PC-9 (cell line): ENCODE measurements at regions of chr11 and their contacts with region 1.

Region 1: DNA sequence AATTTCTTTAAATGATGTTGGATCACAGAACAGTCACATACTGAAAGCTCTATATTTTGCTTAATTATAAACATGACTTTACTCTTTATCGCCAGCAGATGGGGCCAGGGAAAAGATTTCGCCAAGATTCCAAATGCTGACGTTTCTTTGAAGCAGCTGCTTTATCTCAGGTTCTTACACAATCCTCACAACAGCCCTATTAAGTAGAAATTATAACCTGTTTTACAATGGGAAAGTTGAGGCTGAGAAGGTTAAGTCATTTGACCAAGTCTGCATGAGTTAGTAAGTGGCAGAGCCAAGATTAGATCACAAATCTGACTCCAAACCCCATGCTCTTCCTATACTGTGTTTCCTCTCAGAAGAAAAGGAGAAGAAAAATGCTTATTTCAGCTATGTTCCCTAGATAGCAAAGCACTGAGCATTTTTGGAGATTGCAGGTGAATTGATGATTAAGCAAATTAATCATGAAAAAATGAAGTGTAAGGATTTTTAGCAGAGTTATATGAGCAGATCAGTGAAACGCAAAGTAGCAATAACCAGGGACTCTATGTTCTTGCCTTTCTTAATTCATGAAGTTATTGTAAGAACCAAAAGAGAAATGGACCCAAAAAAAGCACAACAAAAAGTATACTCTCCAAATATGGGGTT is 79.0 kb downstream of the AASDHPPT start:
- DNase-seq: peak in 1 of 2 experiments; percentile 3
- H3K4me3 ChIP-seq: no peak overlapping the region
- H3K27ac ChIP-seq: no peak overlapping the region
- H3K4me1 ChIP-seq: no peaks in the 10 kb centered on the region; the same call in 1 of the 2 replicates
- H3K27me3 ChIP-seq: no peaks in the 10 kb centered on the region
- CTCF ChIP-seq: peak; percentile 80

Region 2: DNA sequence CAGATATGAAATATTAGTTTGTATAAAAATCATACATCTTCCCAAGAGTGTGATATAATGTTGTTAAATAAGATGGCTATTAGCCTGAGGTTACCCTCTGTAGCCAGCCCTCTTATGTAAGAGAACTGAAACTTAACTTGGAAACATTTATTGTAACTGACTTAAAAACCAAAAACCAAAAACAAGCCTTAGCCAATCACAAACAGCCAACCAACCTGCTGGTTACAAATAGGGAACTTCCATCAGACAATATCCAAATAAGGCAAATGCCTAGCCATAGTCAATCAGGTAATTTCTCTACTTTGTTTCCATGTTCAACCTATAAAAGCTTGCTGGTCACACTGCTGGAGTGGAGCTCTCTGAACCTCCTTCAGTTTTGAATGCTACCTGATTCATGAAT is 93.4 kb before region 1 on chr11:
- CTCF ChIA-PET with region 1: no interaction called
- POLR2A ChIA-PET with region 1: no interaction called
- intact Hi-C with region 1: no loop called
- DNase-seq: no peak
- H3K4me3 ChIP-seq: no peak overlapping the region
- H3K27ac ChIP-seq: no peak overlapping the region
- H3K4me1 ChIP-seq: no peaks in the 10 kb centered on the region
- H3K27me3 ChIP-seq: no peaks in the 10 kb centered on the region
- CTCF ChIP-seq: no peak

Region 3: DNA sequence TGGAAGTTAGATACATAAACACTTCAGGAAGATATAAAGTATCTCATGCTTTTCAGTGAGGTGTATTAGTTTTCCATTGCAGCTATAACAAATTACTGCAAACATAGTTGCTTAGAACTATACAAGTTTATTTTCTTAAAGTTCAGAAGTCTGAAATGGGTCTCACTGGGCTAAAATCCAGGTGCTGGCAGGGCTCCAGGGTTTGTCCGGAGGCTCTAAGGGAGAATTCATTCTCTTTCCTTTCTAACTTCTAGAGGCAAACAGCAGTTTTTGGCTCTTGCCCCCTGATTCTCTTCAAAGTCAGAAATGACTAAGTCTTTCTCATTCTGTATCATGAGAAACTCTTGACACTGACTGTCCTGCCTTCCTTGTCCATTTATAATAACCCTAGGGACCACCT is 59.9 kb after region 1 on chr11:
- CTCF ChIA-PET with region 1: no interaction called
- POLR2A ChIA-PET with region 1: no interaction called
- intact Hi-C with region 1: no loop called
- DNase-seq: no peak
- H3K4me3 ChIP-seq: no peak overlapping the region
- H3K27ac ChIP-seq: no peak overlapping the region
- H3K4me1 ChIP-seq: no peaks in the 10 kb centered on the region
- H3K27me3 ChIP-seq: peaks cover 4% of the 10 kb centered on the region; the same call in 1 of the 2 replicates
- CTCF ChIP-seq: no peak

Region 4: GRCh38 chr11:106480581-106481190 is 324.3 kb after region 1 on chr11:
- CTCF ChIA-PET with region 1: interaction called, 10 read pairs
- POLR2A ChIA-PET with region 1: no interaction called
- intact Hi-C with region 1: no loop called
- DNase-seq: peak in 1 of 2 experiments; percentile 58
- H3K4me3 ChIP-seq: no peak overlapping the region
- H3K27ac ChIP-seq: 0 out of 2 replicates have a peak overlapping the region, but pooled peaks have one; percentile 6
- H3K4me1 ChIP-seq: peaks cover 44% of the 10 kb centered on the region
- H3K27me3 ChIP-seq: no peaks in the 10 kb centered on the region
- CTCF ChIP-seq: no peak

Region 5: GRCh38 chr11:107043242-107044006 is 887.0 kb after region 1 on chr11:
- CTCF ChIA-PET with region 1: no interaction called
- POLR2A ChIA-PET with region 1: no interaction called
- intact Hi-C with region 1: loop called (anchors 10 kb)
- DNase-seq: peak in 1 of 2 experiments; percentile 58
- H3K4me3 ChIP-seq: no peak overlapping the region
- H3K27ac ChIP-seq: no peak overlapping the region
- H3K4me1 ChIP-seq: 0 out of 2 replicates have a peak, but pooled peaks cover 4% of the 10 kb centered on the region
- H3K27me3 ChIP-seq: no peaks in the 10 kb centered on the region
- CTCF ChIP-seq: no peak